ENCODE measurements at regions of chr18 and their contacts with region 1.

Region 1: DNA sequence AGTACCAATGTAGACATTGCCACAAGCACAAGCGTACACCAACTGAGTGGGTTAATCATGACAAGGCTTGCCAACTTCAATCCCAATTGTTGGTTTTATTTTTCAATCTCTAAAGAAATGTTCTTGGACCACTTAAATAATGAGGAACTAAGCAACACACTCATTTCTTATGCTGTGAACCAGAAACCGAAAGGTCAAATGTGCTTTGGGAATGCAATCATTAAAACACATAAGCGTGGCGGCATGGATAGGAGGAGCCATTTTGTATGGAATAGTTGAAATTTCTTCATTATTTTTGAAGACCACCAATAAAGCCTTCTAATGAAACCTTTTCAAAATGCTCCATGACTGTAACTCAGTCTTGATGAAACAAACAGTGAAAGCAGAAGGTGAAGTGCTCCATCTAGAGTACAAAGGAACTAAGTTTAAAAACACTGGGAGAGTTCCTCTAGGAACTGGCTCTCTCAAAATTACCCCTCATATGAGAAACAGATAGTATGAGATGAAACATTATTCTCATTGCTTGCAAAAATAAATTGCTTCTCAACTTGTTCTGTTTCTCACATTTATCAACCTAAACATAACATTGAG is 113.2 kb upstream of the CHST9 start:
- DNase-seq: no peak
- ATAC-seq: peak in 3 of 4 donors; percentile 52 to 67 (median 65)
- H3K4me3 ChIP-seq: no peak overlapping the region
- H3K27ac ChIP-seq: no peak overlapping the region
- H3K4me1 ChIP-seq: no peaks in the 10 kb centered on the region
- H3K27me3 ChIP-seq: no peaks in the 10 kb centered on the region
- CTCF ChIP-seq: peak in 11 of 12 donors; percentile 15 to 56 (median 46)
- POLR2A ChIP-seq: no peak

Region 2: DNA sequence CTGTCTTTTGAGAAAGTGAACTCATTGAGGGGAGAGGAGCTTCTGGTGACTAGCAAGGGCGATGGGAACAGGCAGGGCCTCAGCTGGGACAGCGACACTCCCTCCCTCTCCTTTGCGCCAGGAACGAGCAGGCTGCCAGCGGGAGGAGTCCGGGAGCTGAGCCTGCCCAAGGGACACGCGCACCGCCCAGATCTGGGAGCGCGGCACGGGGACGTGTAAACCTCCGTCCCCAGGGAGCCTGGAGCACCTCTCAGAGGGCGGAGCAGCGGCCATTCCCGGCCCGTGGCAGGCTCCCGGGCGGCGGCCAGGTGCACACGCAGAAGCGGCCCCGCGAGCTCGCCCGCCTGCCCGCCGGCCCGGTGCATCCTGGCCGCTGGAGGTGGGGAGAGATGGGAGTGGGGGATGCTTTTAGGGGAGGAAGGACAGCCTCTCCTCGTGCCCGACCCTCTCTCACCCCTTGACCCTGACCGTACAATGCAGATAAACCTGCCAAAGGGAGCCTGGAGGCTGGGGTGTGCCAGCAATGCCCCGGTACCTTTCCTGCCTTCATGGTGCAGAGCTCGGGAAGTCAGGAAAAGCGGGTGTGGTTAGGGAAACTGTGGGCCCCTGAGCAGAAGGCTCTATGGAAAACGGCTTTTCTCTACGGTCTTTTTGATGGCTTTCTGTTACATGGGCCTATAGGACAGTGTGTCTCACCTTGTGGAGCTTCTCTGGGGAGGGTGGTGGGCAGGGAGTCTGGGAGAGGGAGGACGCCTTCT is 435.0 kb before region 1 on chr18:
- intact Hi-C with region 1: no loop called
- DNase-seq: peak; percentile 50 to 88 (median 87)
- ATAC-seq: peak; percentile 93 to 97 (median 96)
- H3K4me3 ChIP-seq: peak overlapping the region; percentile 16 to 58 (median 48)
- H3K27ac ChIP-seq: peak overlapping the region in 6 of 12 donors; percentile 59 to 80 (median 70)
- H3K4me1 ChIP-seq: peaks cover 0 to 12% (median 4%) of the 10 kb centered on the region in 12 donors
- H3K27me3 ChIP-seq: peaks cover 0 to 27% (median 0%) of the 10 kb centered on the region in 9 donors
- CTCF ChIP-seq: no peak
- POLR2A ChIP-seq: no peak

Region 3: GRCh38 chr18:27311114-27311513 is 12.8 kb after region 1 on chr18:
- intact Hi-C with region 1: loop called in 1 of 10 experiments (anchors 2 kb)
- DNase-seq: no peak
- ATAC-seq: no peak
- H3K4me3 ChIP-seq: no peak overlapping the region
- H3K27ac ChIP-seq: no peak overlapping the region
- H3K4me1 ChIP-seq: no peaks in the 10 kb centered on the region
- H3K27me3 ChIP-seq: no peaks in the 10 kb centered on the region
- CTCF ChIP-seq: no peak
- POLR2A ChIP-seq: no peak